ENCODE measurements at regions of chr7 and their contacts with region 1.

Region 1: GRCh38 chr7:135335628-135336139 is 102.0 kb downstream of the STRA8 start:
- DNase-seq: peak; percentile 86
- H3K4me3 ChIP-seq: no peak overlapping the region
- H3K27ac ChIP-seq: no peak overlapping the region
- H3K4me1 ChIP-seq: peaks cover 0 to 15% of the 10 kb centered on the region in 2 experiments; a peak in 1 of 4 replicates
- H3K27me3 ChIP-seq: no peaks in the 10 kb centered on the region
- CTCF ChIP-seq: peak; percentile 60
- EP300 ChIP-seq: no peak
- RAD21 ChIP-seq: peak; percentile 99

Region 2: GRCh38 chr7:135291809-135292253 is 43.9 kb before region 1 on chr7:
- CTCF ChIA-PET with region 1: interaction called, 737 read pairs
- POLR2A ChIA-PET with region 1: no interaction called
- DNase-seq: no peak
- H3K4me3 ChIP-seq: no peak overlapping the region
- H3K27ac ChIP-seq: no peak overlapping the region; a peak in 1 of 4 replicates
- H3K4me1 ChIP-seq: peaks cover 0 to 4% of the 10 kb centered on the region in 2 experiments; a peak in 1 of 4 replicates
- H3K27me3 ChIP-seq: no peaks in the 10 kb centered on the region
- CTCF ChIP-seq: no peak
- EP300 ChIP-seq: no peak
- RAD21 ChIP-seq: no peak

Region 3: DNA sequence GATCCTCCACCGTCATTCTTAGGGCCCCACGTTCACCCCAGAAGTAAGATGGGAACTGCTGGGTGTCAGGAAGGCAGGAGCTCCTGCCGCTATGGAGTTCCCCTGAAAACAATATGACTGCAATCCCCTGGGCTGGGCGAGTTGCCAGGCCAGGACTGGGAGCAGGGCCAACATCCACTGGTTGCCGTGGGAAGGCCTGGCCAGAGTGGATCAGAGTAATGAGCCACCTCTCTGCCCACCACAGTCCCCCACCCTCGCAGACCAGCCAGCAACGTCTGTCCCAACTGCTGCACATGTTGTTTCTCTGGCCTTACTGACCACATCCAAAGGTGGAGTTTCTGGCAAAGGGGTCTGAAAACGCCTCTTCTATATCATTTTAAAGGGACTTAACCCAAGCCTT is 15.4 kb before region 1 on chr7:
- CTCF ChIA-PET with region 1: interaction called, 108 read pairs
- POLR2A ChIA-PET with region 1: interaction called, 8 read pairs
- DNase-seq: peak; percentile 90
- H3K4me3 ChIP-seq: no peak overlapping the region
- H3K27ac ChIP-seq: peak overlapping the region; percentile 28 to 89; a peak in 3 of 4 replicates
- H3K4me1 ChIP-seq: peaks cover 0 to 35% of the 10 kb centered on the region in 2 experiments; a peak in 2 of 4 replicates
- H3K27me3 ChIP-seq: no peaks in the 10 kb centered on the region
- CTCF ChIP-seq: no peak
- EP300 ChIP-seq: peak; percentile 30 to 37; a peak in 2 of 4 replicates
- RAD21 ChIP-seq: peak; percentile 28; the same call in 1 of the 2 replicates

Region 4: GRCh38 chr7:135362871-135363270 is 27.2 kb after region 1 on chr7:
- CTCF ChIA-PET with region 1: interaction called, 18 read pairs
- POLR2A ChIA-PET with region 1: no interaction called
- DNase-seq: no peak
- H3K4me3 ChIP-seq: no peak overlapping the region
- H3K27ac ChIP-seq: no peak overlapping the region
- H3K4me1 ChIP-seq: peaks cover 0 to 5% of the 10 kb centered on the region in 2 experiments; a peak in 1 of 4 replicates
- H3K27me3 ChIP-seq: no peaks in the 10 kb centered on the region
- CTCF ChIP-seq: peak; percentile 33
- EP300 ChIP-seq: no peak
- RAD21 ChIP-seq: no peak

Region 5: DNA sequence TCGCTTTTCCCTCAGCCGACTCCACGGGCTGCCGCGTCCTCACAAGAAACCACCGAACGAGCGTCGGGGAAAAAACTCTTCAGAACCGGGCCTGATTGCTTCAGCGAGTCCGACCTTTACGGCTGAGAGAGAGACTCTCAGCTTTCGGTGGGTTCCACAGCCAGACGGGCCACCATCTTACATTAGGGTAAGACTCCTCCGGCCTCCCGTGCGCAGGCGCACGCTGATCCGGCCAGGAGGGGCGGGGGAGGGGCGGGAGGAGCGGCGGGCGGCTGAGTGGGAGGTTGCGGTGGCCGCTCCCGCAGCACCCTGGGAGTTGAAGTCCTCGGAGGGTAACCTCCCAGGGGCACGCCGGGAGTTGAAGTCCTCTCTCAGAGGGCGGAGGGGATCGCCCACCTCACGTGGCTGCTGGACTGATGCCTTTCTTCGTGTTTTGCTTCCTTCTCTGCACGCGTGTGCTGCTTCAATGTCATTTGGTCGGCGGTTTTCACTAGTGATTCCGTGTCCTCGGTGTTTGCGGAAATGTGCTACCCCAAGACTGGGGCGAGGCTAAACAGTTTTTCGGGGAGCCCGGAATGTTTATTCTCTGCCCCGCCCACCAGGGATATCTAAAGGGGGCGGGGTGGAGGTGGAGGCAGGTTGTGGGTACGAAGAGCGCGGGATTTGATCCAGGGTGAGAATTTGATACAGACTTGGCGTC is 174.4 kb after region 1 on chr7 and contains the start of gene CNOT4:
- CTCF ChIA-PET with region 1: interaction called, 12 read pairs
- POLR2A ChIA-PET with region 1: no interaction called
- DNase-seq: peak; percentile 98
- H3K4me3 ChIP-seq: peak within 1 kb of the TSS; percentile 58 to 87
- H3K27ac ChIP-seq: peak within 1 kb of the TSS; percentile 90 to 92
- H3K4me1 ChIP-seq: peaks cover 9 to 17% of the 10 kb centered on the region in 2 experiments; a peak in 3 of 4 replicates
- H3K27me3 ChIP-seq: no peaks in the 10 kb centered on the region
- CTCF ChIP-seq: no peak
- EP300 ChIP-seq: no peak
- RAD21 ChIP-seq: no peak
- polyA plus RNA-seq, gene CNOT4: 8.0 and 9.3 TPM in 2 replicates

Region 6: DNA sequence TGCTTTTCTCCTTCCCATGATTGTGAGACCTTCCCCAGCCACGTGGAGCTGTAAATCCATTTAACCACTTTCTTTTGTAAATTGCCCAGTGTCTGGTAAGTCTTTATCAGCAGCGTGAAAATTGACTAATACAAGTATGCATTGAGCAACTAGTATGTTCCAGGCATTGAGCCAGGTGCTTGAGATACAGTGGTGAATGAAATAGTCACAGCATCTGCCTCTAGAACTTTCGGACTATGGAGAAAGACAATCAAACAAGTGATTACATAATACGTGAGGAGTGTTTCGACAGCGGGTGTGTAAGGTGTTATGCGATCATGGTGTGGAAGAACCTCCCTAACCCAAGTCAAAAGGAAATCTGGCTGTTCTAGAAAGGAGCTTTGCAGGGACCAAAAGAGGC is 200.5 kb after region 1 on chr7:
- CTCF ChIA-PET with region 1: no interaction called
- POLR2A ChIA-PET with region 1: no interaction called
- DNase-seq: no peak
- H3K4me3 ChIP-seq: no peak overlapping the region
- H3K27ac ChIP-seq: no peak overlapping the region
- H3K4me1 ChIP-seq: no peaks in the 10 kb centered on the region
- H3K27me3 ChIP-seq: no peaks in the 10 kb centered on the region
- CTCF ChIP-seq: no peak
- EP300 ChIP-seq: no peak
- RAD21 ChIP-seq: no peak

Measured in SK-N-SH (cell line).